ENCODE measurements at regions of chr11 and their contacts with region 1.

Region 1: DNA sequence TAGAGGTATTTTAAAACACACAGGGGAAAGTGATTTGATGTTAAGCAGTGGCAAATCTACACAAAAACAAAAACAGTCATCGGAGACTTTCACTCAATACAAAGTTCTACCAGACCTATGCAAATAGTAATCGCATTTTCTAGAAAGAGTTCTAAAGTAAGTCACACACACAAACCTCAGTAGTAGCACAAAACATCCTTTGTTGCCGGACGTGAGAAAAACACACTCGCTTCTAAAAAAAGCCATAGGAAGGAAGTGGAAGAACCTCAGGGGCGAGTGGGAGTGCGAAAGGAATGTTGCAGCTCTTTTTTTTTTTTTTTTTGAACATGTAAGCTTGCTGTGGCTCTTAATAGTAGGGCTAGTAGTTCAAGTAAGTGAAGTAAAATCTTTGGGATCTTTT is 88.9 kb downstream of the MAML2 start:
- DNase-seq: peak; percentile 28 to 50 (median 47)
- H3K4me3 ChIP-seq: peak overlapping the region in 1 of 2 donors; percentile 36
- H3K4me3 Mint-ChIP-seq: peak overlapping the region; percentile 69 to 92 (median 84)
- H3K27ac ChIP-seq: peak overlapping the region; percentile 8
- H3K27ac Mint-ChIP-seq: peak overlapping the region; percentile 73 to 97 (median 91)
- H3K4me1 ChIP-seq: peaks cover 75% of the 10 kb centered on the region
- H3K4me1 Mint-ChIP-seq: peaks cover 68 to 94% (median 83%) of the 10 kb centered on the region in 4 donors
- H3K27me3 ChIP-seq: no peaks in the 10 kb centered on the region
- H3K27me3 Mint-ChIP-seq: no peaks in the 10 kb centered on the region

Region 2: GRCh38 chr11:95991101-95991500 is 263.0 kb before region 1 on chr11:
- CTCF ChIA-PET with region 1: no interaction called
- POLR2A ChIA-PET with region 1: no interaction called
- intact Hi-C with region 1: no loop called
- DNase-seq: no peak
- H3K4me3 ChIP-seq: no peak overlapping the region
- H3K4me3 Mint-ChIP-seq: no peak overlapping the region
- H3K27ac ChIP-seq: no peak overlapping the region
- H3K27ac Mint-ChIP-seq: no peak overlapping the region
- H3K4me1 ChIP-seq: no peaks in the 10 kb centered on the region
- H3K4me1 Mint-ChIP-seq: peaks cover 5 to 18% (median 13%) of the 10 kb centered on the region in 4 donors
- H3K27me3 ChIP-seq: no peaks in the 10 kb centered on the region
- H3K27me3 Mint-ChIP-seq: no peaks in the 10 kb centered on the region

Region 3: GRCh38 chr11:96187822-96188221 is 66.3 kb before region 1 on chr11:
- CTCF ChIA-PET with region 1: no interaction called
- POLR2A ChIA-PET with region 1: no interaction called
- intact Hi-C with region 1: no loop called
- DNase-seq: no peak
- H3K4me3 ChIP-seq: no peak overlapping the region
- H3K4me3 Mint-ChIP-seq: peak overlapping the region in 2 of 8 donors; percentile 70 to 76
- H3K27ac ChIP-seq: no peak overlapping the region
- H3K27ac Mint-ChIP-seq: peak overlapping the region in 3 of 7 donors; percentile 25 to 78 (median 30)
- H3K4me1 ChIP-seq: peaks cover 34% of the 10 kb centered on the region
- H3K4me1 Mint-ChIP-seq: peaks cover 34 to 67% (median 49%) of the 10 kb centered on the region in 4 donors
- H3K27me3 ChIP-seq: no peaks in the 10 kb centered on the region
- H3K27me3 Mint-ChIP-seq: no peaks in the 10 kb centered on the region

Region 4: DNA sequence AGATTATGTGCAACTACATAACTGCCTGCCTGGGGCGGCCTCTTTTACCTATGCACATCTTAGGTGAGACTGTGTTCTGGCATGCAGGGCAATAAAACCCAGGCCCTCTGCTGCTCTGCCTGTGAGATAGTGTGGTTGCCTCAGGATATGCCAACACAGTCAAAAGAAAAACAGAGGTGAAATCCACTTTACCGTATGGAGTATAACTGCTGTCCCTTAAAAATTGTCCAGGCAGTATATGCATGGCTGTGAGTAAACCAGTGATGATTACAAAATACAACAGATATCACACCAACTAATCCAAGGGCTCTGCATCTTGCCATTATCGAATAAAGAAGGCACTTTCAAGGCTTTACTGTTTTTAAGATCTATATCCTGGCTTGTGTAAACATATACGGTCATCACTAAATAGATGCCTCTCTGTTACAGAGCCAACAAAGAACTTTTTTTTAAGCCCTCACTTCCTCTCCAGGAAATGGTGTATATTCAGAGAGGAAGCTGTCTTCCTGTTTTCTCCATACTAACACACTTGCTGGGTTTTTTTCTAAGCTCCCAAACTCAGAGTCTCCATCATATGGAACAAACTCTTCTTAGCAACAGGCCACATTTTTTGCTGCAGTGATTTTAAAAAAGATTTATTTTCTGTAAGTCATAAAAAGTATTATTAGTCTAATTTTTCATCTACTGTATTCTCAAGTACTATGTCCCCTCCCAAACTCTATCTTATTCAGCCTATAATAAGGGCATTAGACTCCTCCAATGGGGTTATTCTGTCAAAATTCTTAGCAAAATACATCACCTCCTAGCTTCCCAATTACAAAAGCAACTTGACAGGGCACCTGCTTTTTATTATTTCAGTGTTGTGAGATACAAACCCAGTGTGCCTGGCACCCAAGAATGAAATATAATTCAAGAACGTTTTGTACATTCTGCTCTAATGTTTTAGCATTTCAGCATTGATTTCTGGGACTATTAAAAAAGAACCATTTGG is 46.3 kb before region 1 on chr11:
- CTCF ChIA-PET with region 1: no interaction called
- POLR2A ChIA-PET with region 1: interaction called, 36 read pairs
- intact Hi-C with region 1: loop called (anchors 2 kb)
- DNase-seq: peak in 4 of 5 donors; percentile 52 to 62 (median 56)
- H3K4me3 ChIP-seq: peak overlapping the region in 1 of 2 donors; percentile 16
- H3K4me3 Mint-ChIP-seq: peak overlapping the region; percentile 31 to 89 (median 70)
- H3K27ac ChIP-seq: peak overlapping the region; percentile 39
- H3K27ac Mint-ChIP-seq: peak overlapping the region; percentile 80 to 97 (median 90)
- H3K4me1 ChIP-seq: peaks cover 97% of the 10 kb centered on the region
- H3K4me1 Mint-ChIP-seq: peaks cover 62 to 92% (median 79%) of the 10 kb centered on the region in 4 donors
- H3K27me3 ChIP-seq: no peaks in the 10 kb centered on the region
- H3K27me3 Mint-ChIP-seq: no peaks in the 10 kb centered on the region

Region 5: DNA sequence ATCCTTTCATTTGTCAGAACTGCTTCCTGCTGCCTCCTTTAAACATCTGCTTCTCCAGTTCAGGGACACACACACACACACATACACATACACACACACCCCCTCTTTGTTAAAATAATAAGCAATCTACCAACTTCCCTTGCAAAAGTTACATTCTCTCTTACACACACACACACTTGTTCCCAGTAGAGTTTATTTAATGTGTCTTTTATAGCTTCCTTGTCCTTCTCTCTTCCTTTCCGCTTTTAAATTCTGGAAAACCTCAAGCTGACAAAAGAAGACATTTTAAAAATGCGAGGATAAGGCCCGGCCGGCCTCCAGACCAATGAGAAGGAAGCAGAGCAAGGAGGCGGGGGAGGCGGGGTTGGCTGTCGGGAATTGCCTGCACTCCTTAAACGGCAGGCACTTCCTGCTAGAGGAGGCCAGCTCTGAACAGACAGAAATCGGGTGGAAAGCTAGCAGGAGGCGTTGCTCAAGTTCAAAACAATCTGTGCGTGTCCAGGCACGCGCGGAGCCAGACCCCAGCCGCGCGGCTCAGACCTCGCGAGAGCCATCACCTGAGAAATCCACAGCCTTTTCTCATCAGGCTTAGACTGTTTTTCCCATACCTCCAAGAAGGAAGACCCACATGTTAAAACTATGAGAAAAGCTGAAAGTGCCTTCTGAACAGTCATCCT is 11.0 kb before region 1 on chr11:
- CTCF ChIA-PET with region 1: interaction called, 5 read pairs
- POLR2A ChIA-PET with region 1: interaction called, 35 read pairs
- intact Hi-C with region 1: loop called (anchors 1 kb)
- DNase-seq: peak; percentile 65 to 89 (median 68)
- H3K4me3 ChIP-seq: peak overlapping the region; percentile 33 to 57
- H3K4me3 Mint-ChIP-seq: peak overlapping the region; percentile 85 to 93 (median 90)
- H3K27ac ChIP-seq: peak overlapping the region; percentile 63
- H3K27ac Mint-ChIP-seq: peak overlapping the region; percentile 88 to 97 (median 93)
- H3K4me1 ChIP-seq: peaks cover 47% of the 10 kb centered on the region
- H3K4me1 Mint-ChIP-seq: peaks cover 28 to 57% (median 48%) of the 10 kb centered on the region in 4 donors
- H3K27me3 ChIP-seq: no peaks in the 10 kb centered on the region
- H3K27me3 Mint-ChIP-seq: no peaks in the 10 kb centered on the region

Region 6: DNA sequence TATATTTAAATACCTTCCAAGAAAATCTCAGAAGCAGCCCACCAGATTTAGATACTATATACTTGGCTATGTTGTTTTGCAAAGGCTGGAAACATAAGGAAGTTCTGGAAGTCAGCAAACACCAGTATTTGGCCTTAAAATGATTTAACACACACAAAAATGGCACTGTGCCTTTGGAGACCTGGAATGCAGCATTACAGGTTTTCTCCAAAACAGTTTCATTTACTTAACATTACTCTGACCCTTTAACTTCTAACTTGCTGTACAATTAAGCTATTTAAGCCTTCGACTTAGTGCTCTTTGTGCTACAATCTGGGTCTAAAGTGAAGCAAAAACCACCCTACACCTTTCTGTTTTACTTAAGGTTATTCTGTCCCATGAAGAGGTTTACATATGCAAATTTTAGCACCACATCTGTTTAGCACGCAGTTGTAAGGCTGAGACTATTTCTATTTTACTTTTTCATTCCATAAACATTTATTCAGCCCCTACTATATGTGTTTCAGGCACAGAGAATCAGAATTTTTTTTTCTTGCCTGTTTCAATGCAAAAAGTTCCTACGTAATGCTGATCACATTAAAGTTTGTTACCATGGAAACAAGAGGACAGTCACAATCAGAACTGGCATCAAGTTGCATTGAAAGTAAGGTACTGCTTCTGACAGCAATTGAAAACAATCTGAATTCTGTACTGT is 18.6 kb after region 1 on chr11:
- CTCF ChIA-PET with region 1: interaction called, 3 read pairs
- POLR2A ChIA-PET with region 1: interaction called, 27 read pairs
- intact Hi-C with region 1: loop called (anchors 1 kb)
- DNase-seq: peak; percentile 42 to 75 (median 69)
- H3K4me3 ChIP-seq: no peak overlapping the region
- H3K4me3 Mint-ChIP-seq: peak overlapping the region in 4 of 8 donors; percentile 18 to 31 (median 24)
- H3K27ac ChIP-seq: peak overlapping the region; percentile 59
- H3K27ac Mint-ChIP-seq: peak overlapping the region; percentile 86 to 97 (median 93)
- H3K4me1 ChIP-seq: peaks cover 27% of the 10 kb centered on the region
- H3K4me1 Mint-ChIP-seq: peaks cover 34 to 56% (median 44%) of the 10 kb centered on the region in 4 donors
- H3K27me3 ChIP-seq: no peaks in the 10 kb centered on the region
- H3K27me3 Mint-ChIP-seq: no peaks in the 10 kb centered on the region

Region 7: GRCh38 chr11:96664110-96664509 is 410.0 kb after region 1 on chr11:
- CTCF ChIA-PET with region 1: no interaction called
- POLR2A ChIA-PET with region 1: no interaction called
- intact Hi-C with region 1: no loop called
- DNase-seq: no peak
- H3K4me3 ChIP-seq: no peak overlapping the region
- H3K4me3 Mint-ChIP-seq: no peak overlapping the region
- H3K27ac ChIP-seq: no peak overlapping the region
- H3K27ac Mint-ChIP-seq: no peak overlapping the region
- H3K4me1 ChIP-seq: no peaks in the 10 kb centered on the region
- H3K4me1 Mint-ChIP-seq: no peaks in the 10 kb centered on the region
- H3K27me3 ChIP-seq: no peaks in the 10 kb centered on the region
- H3K27me3 Mint-ChIP-seq: no peaks in the 10 kb centered on the region

Measured in CD4-positive, alpha-beta memory T cell (primary cell).